PC-3 (cell line): ENCODE measurements at regions of chr4 and their contacts with region 1.

Region 1: DNA sequence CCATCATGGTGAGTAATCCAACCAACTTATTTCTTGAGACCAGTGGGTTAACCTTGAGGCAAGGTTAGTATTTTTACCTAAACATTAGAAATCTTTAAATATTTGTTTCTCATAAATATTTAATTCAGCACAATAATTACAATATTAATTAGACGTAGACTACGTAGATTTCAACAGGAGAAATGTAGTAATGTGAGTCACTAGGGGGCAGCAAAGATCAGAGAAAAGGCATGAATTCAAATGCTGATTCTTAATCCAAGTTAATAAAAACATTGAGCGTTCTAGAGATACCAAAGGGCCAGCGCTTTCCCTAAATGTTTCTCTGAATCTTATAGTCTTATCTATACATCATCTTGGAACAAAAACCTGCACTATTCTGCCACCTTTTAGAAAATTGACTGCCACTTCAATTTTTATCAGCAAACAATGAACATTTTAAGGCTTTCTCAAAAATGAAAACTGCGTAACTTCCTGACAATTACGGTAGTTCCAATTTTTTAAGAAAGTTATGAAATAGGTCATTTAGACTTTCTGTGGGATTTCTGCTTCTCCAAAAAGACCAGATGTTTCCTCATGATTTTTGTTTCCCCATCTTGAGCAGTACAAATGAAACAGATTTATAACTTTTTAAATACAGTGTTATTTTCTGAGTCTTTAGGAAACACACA is 180.7 kb downstream of the GASK1B start:
- DNase-seq: peak; percentile 81
- ATAC-seq: peak; percentile 48
- H3K4me3 ChIP-seq: peak overlapping the region; percentile 46; the same call in 1 of the 2 replicates
- H3K27ac ChIP-seq: no peak overlapping the region
- H3K4me1 ChIP-seq: peaks cover 18% of the 10 kb centered on the region
- H3K27me3 ChIP-seq: no peaks in the 10 kb centered on the region
- CTCF ChIP-seq: peak; percentile 71

Region 2: DNA sequence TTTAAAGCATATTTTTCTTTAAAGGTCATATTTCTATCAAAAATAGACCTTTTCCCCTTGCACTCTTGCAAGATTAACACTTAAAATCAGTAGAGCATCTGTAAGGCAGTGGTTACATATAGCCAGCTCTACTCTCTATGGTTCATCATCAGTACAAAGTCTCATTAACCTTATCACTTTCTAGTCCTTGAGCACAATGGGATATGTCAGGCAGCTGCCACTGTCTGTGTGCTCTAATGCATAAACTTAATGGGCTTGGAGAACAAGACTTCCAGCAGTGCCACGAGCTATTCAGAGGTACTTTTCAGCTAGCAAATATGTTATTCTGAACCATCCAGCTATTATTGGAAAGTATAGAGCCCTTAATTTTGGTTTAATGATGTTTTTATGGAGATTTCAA is 213.1 kb before region 1 on chr4:
- CTCF ChIA-PET with region 1: no interaction called
- POLR2A ChIA-PET with region 1: no interaction called
- intact Hi-C with region 1: no loop called
- DNase-seq: no peak
- ATAC-seq: no peak
- H3K4me3 ChIP-seq: no peak overlapping the region
- H3K27ac ChIP-seq: no peak overlapping the region
- H3K4me1 ChIP-seq: no peaks in the 10 kb centered on the region
- H3K27me3 ChIP-seq: no peaks in the 10 kb centered on the region
- CTCF ChIP-seq: no peak

Region 3: DNA sequence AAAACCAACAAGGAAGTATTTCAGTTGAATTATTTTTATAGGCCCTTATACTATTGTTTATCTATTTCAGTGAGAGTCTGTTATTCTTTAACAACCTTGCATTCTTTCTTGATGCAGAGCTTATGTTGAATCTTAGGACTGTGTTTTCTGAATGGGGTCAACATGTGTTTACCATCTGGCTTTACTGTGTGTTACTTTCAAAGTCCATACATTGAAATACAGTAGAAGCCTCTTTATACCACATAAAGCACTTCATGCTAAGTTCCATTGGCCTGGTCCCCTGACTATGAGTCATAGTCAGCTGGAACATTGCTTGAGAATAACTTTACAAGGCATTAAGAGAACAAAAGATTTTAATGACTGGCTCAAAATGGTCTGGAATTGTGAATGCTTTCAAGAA is 28.0 kb after region 1 on chr4:
- CTCF ChIA-PET with region 1: no interaction called
- POLR2A ChIA-PET with region 1: no interaction called
- intact Hi-C with region 1: loop called (anchors 2 kb)
- DNase-seq: peak; percentile 75
- ATAC-seq: peak; percentile 77
- H3K4me3 ChIP-seq: 0 out of 2 replicates have a peak overlapping the region, but pooled peaks have one; percentile 6
- H3K27ac ChIP-seq: peak overlapping the region; percentile 60
- H3K4me1 ChIP-seq: peaks cover 33% of the 10 kb centered on the region
- H3K27me3 ChIP-seq: no peaks in the 10 kb centered on the region
- CTCF ChIP-seq: no peak

Region 4: GRCh38 chr4:158121187-158121586 is 129.0 kb after region 1 on chr4:
- CTCF ChIA-PET with region 1: no interaction called
- POLR2A ChIA-PET with region 1: no interaction called
- intact Hi-C with region 1: no loop called
- DNase-seq: no peak
- ATAC-seq: no peak
- H3K4me3 ChIP-seq: no peak overlapping the region
- H3K27ac ChIP-seq: no peak overlapping the region
- H3K4me1 ChIP-seq: no peaks in the 10 kb centered on the region
- H3K27me3 ChIP-seq: no peaks in the 10 kb centered on the region
- CTCF ChIP-seq: no peak

Region 5: DNA sequence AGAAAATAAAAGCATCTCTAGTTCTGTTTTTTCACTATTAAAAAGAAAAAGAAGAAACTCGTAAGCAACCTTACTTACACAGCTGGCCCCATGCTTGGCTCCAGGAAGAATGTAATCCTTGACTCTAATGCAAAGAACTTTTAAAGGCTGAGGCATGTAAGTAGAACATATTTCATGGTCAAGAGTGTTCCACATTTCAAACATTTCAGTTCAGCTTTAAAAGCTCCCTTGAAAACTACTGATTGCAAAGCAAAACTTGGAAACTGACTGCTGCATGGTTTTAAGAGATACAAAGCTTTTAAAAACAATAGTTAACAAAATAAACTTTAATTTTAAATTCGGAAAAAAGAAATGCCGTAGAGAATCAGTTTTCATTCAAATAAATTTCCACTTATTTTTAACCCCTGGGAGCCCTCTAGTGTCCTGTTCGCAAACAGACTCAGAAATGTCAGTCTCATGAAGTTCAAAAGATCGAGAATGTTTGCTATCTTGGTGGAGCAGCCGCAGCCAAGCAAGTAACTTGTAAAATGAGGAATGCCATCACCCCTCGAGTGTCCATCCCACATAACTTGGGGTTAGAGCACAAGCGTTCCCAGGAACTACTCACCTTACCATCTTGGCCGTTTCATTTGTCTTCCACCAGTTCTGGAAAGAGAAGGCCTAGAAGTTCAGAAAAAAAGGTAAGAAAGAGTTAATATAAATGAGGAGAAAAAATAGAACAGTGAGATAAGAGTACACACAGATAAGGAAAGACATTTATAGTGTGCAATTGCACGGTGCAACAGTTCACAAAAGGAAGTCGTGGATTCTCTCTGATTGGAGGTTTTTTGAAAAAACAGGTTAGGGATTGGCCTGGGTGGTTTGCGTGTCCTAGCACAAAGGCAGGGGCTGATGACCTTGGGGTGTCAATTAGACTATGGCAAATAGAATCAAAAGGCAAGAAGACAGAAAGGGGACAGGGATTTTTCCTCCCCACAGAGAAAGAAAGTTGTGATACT is 180.4 kb after region 1 on chr4 and contains the start of gene GASK1B:
- CTCF ChIA-PET with region 1: interaction called, 3 read pairs
- POLR2A ChIA-PET with region 1: no interaction called
- intact Hi-C with region 1: loop called (anchors 1 kb)
- DNase-seq: peak; percentile 70
- ATAC-seq: peak; percentile 10; the same call in 1 of the 2 replicates
- H3K4me3 ChIP-seq: peak within 1 kb of the TSS; percentile 66
- H3K27ac ChIP-seq: no peak within 1 kb of the TSS
- H3K4me1 ChIP-seq: peaks cover 28% of the 10 kb centered on the region
- H3K27me3 ChIP-seq: no peaks in the 10 kb centered on the region
- CTCF ChIP-seq: peak; percentile 78
- total RNA-seq, gene GASK1B: 0.46 and 0.51 TPM in 2 replicates

Region 6: GRCh38 chr4:158253350-158253980 is 261.3 kb after region 1 on chr4:
- CTCF ChIA-PET with region 1: interaction called, 5 read pairs
- POLR2A ChIA-PET with region 1: no interaction called
- intact Hi-C with region 1: loop called (anchors 1 kb)
- DNase-seq: peak; percentile 72
- ATAC-seq: peak; percentile 74
- H3K4me3 ChIP-seq: no peak overlapping the region
- H3K27ac ChIP-seq: no peak overlapping the region
- H3K4me1 ChIP-seq: no peaks in the 10 kb centered on the region
- H3K27me3 ChIP-seq: no peaks in the 10 kb centered on the region
- CTCF ChIP-seq: peak; percentile 78

Region 7: GRCh38 chr4:158341896-158342295 is 349.7 kb after region 1 on chr4:
- CTCF ChIA-PET with region 1: no interaction called
- POLR2A ChIA-PET with region 1: no interaction called
- intact Hi-C with region 1: no loop called
- DNase-seq: no peak
- ATAC-seq: no peak
- H3K4me3 ChIP-seq: no peak overlapping the region
- H3K27ac ChIP-seq: no peak overlapping the region
- H3K4me1 ChIP-seq: no peaks in the 10 kb centered on the region
- H3K27me3 ChIP-seq: no peaks in the 10 kb centered on the region
- CTCF ChIP-seq: no peak